Activated T-helper 1 cell treated with anti-CD3 and anti-CD28 coated beads, Interleukin-12 subunit alpha, Interleukin-12 subunit beta, Interleukin-2, Interleukin-4 antibody, amounts not matched to agents 30 ng/mL and 10 ng/mL and 1 ng/mL, durations not matched to agents 14 hours and 24 hours and 36 hours (primary cell): ENCODE measurements at regions of chr20 and their contacts with region 1.

Region 1: DNA sequence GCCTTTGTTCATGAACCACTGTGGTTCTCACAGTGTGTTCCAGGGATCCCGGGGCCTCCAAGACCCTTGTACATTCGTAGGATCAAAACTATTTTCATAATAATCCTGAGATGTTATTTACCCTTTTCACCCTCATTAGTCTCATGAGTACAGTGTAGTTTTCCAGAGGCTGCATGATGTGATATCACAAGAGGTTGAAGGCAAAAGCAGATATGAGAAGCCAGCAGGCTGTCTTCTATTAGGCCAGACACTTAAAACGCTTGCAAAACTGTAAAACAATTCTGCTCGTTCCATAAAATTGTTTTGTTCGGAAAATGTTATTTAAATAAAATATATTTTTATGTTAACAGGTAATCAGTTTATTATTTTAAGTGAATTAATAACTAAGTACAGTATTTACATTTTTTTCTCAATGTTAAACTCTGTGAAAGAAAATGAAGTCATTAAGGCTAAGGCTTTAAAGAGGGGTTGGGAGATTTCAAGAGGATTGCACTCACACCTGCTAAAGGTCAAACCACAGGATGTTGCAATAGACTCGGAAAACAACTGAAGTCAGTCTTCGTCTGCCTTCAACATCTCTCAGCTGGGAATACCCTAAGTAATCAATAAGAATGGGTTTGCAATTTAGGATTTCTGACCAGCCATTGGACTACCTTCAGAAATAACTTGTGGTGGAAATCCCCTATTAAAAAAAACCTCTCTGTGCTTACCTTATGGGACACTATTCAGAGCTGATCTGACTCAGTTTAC is 474.2 kb downstream of the KIF16B start:
- DNase-seq: no peak
- H3K4me3 Mint-ChIP-seq: no peak overlapping the region
- H3K27ac Mint-ChIP-seq: no peak overlapping the region
- H3K4me1 Mint-ChIP-seq: no peaks in the 10 kb centered on the region
- H3K27me3 Mint-ChIP-seq: no peaks in the 10 kb centered on the region

Region 2: DNA sequence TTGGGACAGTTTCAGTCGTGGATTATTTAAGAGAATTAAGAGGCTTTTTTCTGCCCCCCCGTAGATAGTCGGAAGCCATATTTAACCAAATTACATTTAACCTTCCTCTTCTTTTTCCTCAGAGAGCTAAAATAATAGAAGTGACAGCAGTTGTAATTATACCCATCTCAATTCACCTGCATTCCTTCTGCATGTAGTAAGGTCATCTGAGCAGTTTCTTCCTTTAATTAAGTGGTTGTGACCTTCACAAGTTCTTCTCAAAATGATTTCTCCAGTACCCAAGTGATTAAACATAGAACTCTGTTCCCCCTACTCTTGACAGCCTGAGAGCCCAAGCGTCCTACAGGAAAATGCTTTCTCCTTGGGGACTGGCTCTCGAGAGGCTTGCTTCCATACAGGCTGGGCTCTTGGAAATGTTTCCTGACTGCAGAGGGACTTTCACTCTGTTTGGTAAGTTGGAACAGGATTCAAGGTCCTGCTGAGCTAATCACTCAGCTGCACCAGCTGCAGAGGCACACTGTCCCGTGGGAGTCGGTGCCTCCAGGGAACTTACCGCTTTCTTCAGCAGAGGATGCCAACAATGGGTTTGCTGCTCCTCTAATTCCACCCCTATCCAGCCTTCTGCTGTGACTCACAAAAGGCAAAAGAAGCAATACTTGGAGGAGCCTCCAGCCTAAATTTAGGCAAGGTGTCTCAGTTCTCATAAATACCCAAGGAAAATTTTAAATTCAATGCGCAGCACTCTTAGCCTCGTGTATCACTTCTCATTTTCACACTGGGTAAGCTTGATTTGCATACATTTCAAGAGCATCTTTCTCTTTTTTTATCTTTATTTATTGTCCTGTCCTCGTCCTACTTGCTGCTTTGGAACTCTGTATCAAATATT is 59.3 kb after region 1 on chr20:
- intact Hi-C with region 1: loop called (anchors 10 kb)
- DNase-seq: no peak
- H3K4me3 Mint-ChIP-seq: no peak overlapping the region
- H3K27ac Mint-ChIP-seq: no peak overlapping the region
- H3K4me1 Mint-ChIP-seq: no peaks in the 10 kb centered on the region
- H3K27me3 Mint-ChIP-seq: no peaks in the 10 kb centered on the region